Left colon (tissue), 2 donors: ENCODE measurements at regions of chr11 and their contacts with region 1.

Region 1: DNA sequence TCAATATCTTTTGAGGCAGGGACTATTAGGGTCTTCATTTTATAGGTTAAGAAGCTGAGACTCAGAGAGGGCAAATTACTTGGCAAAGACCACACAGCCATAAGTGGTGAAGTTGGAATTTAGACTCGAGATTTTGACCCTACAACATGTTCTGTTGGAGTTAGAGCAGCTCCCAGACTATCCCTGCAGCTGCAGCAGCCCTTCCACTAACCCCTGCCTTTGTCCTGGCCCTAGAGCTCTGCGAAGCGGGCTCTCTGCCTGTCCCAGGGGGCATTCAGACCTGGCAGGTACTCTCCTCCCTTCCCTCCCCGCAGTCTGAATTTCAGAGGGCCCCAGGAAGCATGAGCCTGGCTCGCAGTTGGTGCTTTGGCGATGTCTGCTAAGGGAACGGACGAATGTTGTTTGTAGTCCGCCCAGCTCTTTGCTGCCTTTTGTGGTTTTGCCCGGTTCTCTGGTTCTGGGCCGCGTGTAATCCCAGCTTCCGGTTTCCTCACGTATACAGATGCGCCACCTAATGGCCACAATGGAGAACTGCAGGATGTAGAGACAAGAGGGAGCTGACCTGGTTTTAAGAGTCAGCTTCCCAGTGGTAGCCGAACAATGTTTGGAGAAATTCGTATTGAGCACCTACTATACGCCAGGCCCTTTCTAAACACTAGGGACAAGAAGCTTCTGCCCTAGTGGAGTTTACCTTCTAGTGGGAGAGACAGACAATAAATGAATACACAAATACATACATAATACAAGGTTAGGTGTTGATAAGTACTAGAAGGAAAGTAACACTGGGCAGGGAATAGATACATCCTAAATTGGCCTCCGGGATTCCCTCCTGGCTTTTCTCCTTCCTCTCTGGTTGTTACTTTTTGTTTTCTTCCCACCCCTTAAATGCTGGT is 125.2 kb downstream of the ST3GAL4 start:
- DNase-seq: peak; percentile 81 to 83
- ATAC-seq: peak; percentile 78

Region 2: GRCh38 chr11:126303623-126304456 is 176.8 kb before region 1 on chr11 and contains the start of gene DCPS:
- intact Hi-C with region 1: loop called in 1 of 2 experiments (anchors 10 kb)
- DNase-seq: peak; percentile 83 to 90
- ATAC-seq: peak; percentile 99
- total RNA-seq, gene DCPS: 10.9 to 21.9 TPM

Region 3: GRCh38 chr11:126310228-126310991 is 170.2 kb before region 1 on chr11:
- intact Hi-C with region 1: loop called (anchors 1 to 10 kb)
- DNase-seq: peak; percentile 68 to 83
- ATAC-seq: peak; percentile 78

Region 4: DNA sequence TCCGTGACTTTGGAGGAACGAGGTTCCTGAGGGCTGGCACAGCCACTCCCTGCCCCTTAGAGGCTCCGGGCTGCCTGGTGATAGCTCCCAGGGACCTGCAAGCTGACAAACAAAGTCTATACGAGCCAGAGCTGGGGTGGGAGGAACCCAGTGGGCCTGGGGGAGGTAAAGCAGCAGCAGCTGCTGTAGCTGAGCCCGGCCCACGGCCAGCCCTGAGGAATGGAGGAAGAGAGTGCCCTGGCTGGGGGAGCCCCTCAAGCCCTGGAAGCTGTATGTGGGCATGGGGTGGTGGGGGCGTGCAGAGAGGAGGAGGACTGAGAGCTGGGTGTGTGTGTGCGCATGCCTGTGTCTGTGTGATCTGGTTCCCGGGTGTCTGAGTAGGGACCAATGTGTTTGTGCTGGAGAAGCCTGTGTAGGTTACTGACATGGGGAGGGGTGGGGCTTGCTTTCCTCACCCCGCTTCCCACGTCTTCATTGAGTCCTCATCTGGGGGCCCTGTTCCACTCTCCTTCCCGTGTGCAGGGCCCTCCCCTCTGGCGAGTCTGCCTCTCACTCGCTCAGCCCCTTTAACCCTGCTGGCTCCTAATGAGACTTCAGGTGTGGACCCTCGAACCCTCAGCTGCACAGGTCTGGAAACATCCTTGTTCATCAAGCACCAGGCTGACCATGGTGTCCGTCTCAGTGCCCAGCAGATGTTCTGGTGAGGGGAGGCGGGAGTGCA is 114.4 kb before region 1 on chr11:
- intact Hi-C with region 1: no loop called
- DNase-seq: peak; percentile 39 to 54
- ATAC-seq: peak; percentile 39

Region 5: DNA sequence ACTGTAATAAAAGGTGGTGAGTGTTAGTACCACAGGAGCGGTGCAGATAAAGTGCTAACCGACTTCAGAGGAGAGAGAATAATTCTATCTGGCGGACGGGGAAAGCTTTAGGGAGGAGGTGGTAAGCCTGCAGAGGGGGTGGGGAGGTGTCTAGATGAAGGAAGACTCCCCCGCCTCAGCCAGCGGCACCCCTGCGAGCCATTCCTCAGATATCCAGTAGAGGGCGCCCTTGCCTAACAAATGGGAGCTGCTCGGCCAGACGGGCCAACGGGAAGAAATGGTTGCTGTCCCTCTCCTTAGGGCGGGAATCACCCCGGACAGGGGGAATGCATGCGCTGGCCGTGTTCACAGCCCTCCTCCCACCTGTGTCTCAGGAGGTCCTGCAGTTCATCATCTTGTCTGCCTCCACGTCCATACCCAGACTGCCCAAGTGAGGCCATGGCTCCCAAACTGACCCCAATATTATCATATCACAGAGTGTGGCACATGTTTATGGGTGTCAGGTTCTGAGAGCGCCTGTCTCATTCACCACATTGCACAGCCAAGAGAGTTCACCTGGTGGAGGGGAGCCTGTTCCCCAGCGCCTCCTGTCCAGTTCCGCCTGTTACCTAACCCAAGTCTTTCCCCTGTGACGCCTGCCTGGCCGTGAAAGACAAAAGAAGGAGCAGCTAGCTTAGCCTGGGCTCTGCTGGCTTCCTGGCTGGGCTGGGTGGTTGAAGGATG is 39.7 kb before region 1 on chr11:
- intact Hi-C with region 1: loop called in 1 of 2 experiments (anchors 5 kb)
- DNase-seq: peak; percentile 70 to 77
- ATAC-seq: peak; percentile 89

Region 6: DNA sequence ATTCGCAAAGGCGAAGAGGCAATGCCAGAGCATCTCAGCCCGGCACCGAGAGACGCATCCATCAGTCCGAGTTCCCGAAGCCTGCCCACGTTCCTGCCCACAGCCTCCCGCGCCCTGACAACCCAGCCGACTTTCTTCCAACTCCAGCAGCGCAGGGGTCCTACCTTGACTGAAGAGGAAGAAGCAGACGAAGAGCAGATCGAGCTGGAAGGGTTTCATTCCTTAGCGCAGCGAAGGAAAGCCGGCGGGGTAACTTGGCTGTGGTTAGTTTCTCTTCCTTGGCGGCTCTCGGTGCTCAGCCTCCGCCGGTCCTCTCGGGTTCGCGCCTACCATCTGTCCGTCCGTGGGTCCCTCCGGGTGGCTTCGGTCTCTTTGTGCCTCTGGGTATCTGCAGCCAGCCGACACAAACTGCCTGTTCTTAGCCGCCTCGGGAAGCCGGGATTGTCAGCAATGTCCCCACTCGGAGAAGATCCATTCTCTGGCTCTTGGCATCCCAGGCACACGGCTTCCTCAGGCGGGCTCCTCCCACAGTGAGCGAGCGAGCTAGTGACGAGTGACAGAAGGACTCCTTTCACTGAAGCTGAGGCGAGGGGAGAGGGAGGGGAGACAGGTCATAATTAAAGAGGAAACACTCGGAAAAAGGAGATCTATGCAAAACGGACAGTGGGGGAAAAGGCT is 519.8 kb after region 1 on chr11 and contains the start of gene KIRREL3:
- intact Hi-C with region 1: no loop called
- DNase-seq: no peak
- ATAC-seq: no peak
- total RNA-seq, gene KIRREL3: 1.2 to 1.3 TPM